OCI-LY7 (cell line): ENCODE measurements at regions of chr16 and their contacts with region 1.

Region 1: GRCh38 chr16:28950648-28951409 is at the start of gene NFATC2IP:
- DNase-seq: peak; percentile 100
- H3K4me3 ChIP-seq: peak within 1 kb of the TSS; percentile 85
- H3K27ac ChIP-seq: peak within 1 kb of the TSS; percentile 51
- H3K4me1 ChIP-seq: peaks cover 15% of the 10 kb centered on the region
- CTCF ChIP-seq: no peak
- total RNA-seq, gene NFATC2IP: 68.8 and 73.0 TPM in 2 replicates

Region 2: DNA sequence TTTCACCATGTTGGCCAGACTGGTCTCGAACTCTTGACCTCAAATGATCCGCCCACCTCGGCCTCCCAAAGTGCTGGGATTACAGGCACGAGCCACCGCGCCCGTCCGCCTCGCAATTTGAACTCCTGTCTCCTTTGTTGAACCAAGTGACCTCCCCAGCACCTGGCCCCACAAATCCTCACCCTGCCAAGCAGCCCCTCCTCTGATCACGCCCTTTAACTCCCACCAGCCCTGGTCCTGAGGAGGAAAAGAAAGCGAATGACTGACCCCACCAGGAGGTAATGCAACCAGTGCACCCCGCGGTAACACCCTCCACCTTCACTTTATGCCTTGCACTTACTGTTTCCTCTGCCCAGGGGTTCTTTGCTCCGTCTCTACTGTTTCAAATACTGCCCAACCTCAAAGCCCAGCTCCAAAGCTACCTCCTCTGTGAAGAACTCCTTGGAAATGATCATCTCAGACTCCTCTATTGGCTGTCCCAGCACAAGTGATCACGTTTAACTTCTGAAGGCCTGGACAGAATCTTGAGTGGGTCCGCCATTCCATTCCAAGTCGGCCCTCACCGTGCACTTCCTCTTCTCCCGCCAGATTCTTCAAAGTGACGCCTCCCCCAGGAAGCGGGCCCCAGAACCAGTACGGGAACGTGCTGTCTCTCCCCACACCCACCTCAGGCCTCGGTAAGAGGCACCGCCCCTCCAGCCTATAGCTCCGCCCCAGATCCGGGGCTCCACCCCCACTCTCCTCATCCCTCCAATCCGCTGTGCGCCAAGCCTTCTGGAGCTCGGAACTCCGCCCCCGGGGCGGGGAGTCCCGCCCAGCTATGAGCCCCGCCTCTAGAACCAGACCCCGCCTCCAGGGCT is 14.7 kb before region 1 on chr16:
- CTCF ChIA-PET with region 1: no interaction called
- POLR2A ChIA-PET with region 1: interaction called, 13 read pairs
- intact Hi-C with region 1: no loop called
- DNase-seq: peak; percentile 94
- H3K4me3 ChIP-seq: peak overlapping the region; percentile 28
- H3K27ac ChIP-seq: peak overlapping the region; percentile 37
- H3K4me1 ChIP-seq: peaks cover 44% of the 10 kb centered on the region
- CTCF ChIP-seq: peak; percentile 31; the same call in 1 of the 2 replicates